Sigmoid colon (tissue), 7 donors: ENCODE measurements at regions of chr10 and their contacts with region 1.

Region 1: DNA sequence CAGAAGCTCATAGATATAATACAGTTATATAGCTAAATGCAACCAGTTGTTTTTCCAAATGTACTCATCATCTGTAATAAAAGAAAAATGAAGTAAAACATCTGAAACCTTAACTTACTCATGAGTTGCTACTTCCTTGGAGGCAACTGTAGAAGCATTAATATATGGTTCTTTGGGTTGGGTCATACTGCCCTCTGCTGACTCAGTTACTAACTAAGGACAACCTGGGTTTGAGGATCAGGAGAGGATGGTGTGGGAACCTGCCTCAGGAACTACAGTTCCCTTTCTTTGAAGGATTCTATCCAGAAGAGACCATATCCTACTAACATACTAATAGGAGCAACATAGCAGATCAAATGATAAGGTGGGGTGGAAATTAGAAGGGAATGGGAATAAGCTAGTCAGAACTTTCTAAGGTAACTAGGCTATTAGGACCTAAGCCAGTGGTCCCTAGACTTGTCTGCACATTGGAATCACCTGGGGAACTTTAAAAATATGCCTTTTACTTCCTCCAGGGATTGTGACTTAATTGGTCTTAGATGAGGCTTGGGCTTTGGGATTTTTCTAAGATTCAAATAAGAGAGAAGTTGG is 20.7 kb downstream of the COX15 start:
- DNase-seq: no peak
- H3K4me3 ChIP-seq: no peak overlapping the region
- H3K27ac ChIP-seq: peak overlapping the region in 1 of 4 donors; percentile 86
- H3K4me1 ChIP-seq: peaks cover 0 to 37% (median 34%) of the 10 kb centered on the region in 4 donors
- H3K27me3 ChIP-seq: no peaks in the 10 kb centered on the region
- CTCF ChIP-seq: peak; percentile 11 to 55 (median 34)
- EP300 ChIP-seq: no peak
- POLR2A ChIP-seq: no peak

Region 2: GRCh38 chr10:99394761-99395386 is 316.4 kb before region 1 on chr10:
- intact Hi-C with region 1: loop called (anchors 5 kb)
- DNase-seq: no peak
- H3K4me3 ChIP-seq: no peak overlapping the region
- H3K27ac ChIP-seq: no peak overlapping the region
- H3K4me1 ChIP-seq: peaks cover 0 to 15% (median 4%) of the 10 kb centered on the region in 4 donors
- H3K27me3 ChIP-seq: no peaks in the 10 kb centered on the region
- CTCF ChIP-seq: no peak
- EP300 ChIP-seq: no peak
- POLR2A ChIP-seq: no peak

Region 3: DNA sequence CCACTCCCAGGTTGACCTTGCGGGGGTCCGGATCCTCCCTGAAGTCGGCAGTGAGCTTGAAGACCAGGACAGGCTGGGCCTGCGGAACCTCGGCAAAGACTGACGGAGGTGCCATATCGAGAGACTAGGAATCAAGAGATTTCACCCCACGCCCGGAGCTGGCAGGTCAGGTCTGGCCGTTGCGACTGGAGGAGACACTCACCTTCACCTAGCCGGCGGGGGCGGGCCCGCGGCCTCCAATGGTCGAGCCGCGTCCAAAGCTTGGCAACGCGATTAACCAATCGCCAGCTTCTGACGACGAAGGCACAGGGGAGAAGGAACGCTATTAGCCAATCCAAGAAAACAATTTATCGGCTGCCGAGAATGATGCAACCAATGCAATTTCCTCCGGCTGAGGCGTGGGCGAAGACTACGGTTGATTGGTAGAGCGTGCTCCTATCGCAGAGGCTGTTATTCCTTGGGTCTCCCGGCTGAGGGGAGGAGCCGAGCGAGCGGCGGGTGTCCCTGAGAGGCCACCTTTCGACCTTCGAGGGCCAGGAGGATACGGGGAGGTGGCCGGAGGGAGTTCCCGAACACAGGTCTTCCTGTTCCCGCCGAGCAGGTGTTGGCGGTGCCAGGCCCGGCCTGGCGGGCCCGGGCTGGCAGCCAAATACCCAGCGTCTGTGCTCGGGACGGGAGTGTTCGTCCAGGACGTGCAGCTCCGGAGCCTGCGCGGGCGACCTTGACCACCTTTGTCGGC is 280.6 kb before region 1 on chr10 and contains the start of gene GOT1:
- intact Hi-C with region 1: loop called (anchors 5 kb)
- DNase-seq: peak; percentile 99
- H3K4me3 ChIP-seq: peak within 1 kb of the TSS; percentile 63 to 84 (median 72)
- H3K27ac ChIP-seq: peak within 1 kb of the TSS; percentile 90 to 97 (median 94)
- H3K4me1 ChIP-seq: peaks cover 0 to 52% (median 48%) of the 10 kb centered on the region in 4 donors
- H3K27me3 ChIP-seq: no peaks in the 10 kb centered on the region
- CTCF ChIP-seq: no peak
- EP300 ChIP-seq: peak in 2 of 4 donors; percentile 34 to 39
- POLR2A ChIP-seq: peak; percentile 95 to 96
- total RNA-seq, gene GOT1: 13.4 to 29.6 (median 15.4) TPM

Region 4: DNA sequence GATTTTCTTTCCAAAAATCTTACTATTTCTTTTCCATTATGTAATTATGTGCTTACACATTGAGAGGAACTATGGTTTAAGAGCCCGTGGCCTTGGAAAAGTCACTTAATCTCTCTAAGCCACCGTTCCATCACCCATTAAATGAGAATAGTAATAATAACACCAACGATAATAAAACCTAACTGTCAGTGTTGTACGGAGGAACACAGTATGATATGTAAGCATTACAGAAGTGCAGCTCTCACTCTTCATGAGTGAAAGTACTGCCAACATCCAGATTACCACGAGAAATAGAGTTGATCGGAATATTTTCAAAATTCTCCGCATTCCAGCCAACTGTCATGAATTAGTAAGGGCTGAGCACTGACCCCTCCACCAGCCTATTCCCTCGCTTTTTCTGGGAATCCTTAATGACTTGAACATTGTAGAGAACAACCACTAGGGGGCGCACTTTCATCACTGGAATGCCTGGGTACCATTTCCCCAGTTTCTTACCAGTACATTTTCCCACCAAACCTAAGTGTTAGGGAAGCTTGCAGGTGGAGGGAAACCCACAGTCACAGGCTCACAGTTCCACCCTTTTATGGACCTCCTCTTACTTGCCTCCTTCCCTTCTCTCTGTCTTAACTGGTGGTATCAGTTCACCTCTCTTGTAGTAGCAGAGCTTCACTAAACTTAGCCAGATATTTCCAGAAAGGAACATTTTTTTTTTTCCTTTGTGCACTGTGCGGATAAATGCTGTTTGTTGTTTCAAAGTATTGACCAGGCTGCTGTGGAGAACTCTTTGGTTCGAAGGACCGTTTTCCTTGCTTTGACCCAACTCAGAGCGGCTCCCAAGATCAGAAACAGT is 150.7 kb before region 1 on chr10:
- intact Hi-C with region 1: loop called (anchors 2 kb)
- DNase-seq: peak; percentile 69
- H3K4me3 ChIP-seq: no peak overlapping the region
- H3K27ac ChIP-seq: no peak overlapping the region
- H3K4me1 ChIP-seq: no peaks in the 10 kb centered on the region
- H3K27me3 ChIP-seq: no peaks in the 10 kb centered on the region
- CTCF ChIP-seq: peak; percentile 49 to 79 (median 64)
- EP300 ChIP-seq: no peak
- POLR2A ChIP-seq: no peak

Region 5: GRCh38 chr10:99620713-99621453 is 90.3 kb before region 1 on chr10:
- intact Hi-C with region 1: loop called (anchors 2 kb)
- DNase-seq: peak; percentile 98
- H3K4me3 ChIP-seq: peak overlapping the region; percentile 49 to 92 (median 84)
- H3K27ac ChIP-seq: peak overlapping the region; percentile 93 to 97 (median 96)
- H3K4me1 ChIP-seq: peaks cover 0 to 49% (median 42%) of the 10 kb centered on the region in 4 donors
- H3K27me3 ChIP-seq: no peaks in the 10 kb centered on the region
- CTCF ChIP-seq: no peak
- EP300 ChIP-seq: peak in 1 of 4 donors; percentile 66
- POLR2A ChIP-seq: peak; percentile 76 to 77

Region 6: GRCh38 chr10:99630439-99630838 is 80.8 kb before region 1 on chr10:
- intact Hi-C with region 1: loop called (anchors 2 kb)
- DNase-seq: no peak
- H3K4me3 ChIP-seq: no peak overlapping the region
- H3K27ac ChIP-seq: no peak overlapping the region
- H3K4me1 ChIP-seq: no peaks in the 10 kb centered on the region
- H3K27me3 ChIP-seq: no peaks in the 10 kb centered on the region
- CTCF ChIP-seq: peak in 2 of 4 experiments; percentile 9 to 21
- EP300 ChIP-seq: no peak
- POLR2A ChIP-seq: no peak

Region 7: DNA sequence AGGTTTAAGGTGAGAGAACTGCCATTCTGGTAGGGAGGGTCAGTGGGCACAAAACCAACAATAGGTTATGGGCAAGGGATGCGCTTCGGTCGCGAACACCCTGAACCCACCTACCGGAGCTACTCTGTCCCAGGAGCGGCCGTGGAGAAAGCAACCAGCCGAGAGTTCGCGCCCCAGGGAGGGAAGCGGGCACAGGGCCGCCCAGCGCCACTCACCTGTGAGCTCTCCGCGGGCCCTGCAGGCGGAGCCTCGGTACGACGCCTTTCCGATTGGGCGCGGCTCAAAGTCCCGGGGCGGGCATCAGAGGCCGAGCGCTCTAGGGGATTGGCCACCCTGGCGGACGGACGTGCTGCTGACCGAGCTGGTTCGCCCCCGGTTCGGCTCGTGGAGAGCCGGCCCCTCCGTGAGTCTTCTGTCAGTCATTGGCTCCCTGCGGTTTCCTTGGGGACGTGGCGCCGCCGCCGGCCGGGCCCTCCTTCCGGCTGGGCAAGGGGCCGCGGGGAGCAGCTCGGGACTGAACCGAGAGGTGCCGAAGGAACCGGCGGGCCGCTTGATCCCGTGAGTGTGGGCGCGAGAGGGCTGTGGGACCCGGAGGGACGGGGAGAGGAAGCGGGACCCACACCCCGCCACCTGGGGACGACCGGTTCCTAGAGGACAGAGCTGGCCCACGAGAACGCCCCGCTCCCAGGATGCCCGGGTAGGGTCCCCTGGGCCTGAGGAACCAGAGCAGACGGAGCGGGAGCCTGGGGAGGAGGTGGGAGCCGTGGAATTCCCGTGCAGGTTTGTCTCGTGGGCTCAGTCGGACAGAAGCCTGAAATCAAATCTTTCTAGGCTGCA is 52.0 kb before region 1 on chr10 and contains the start of gene ENTPD7:
- intact Hi-C with region 1: loop called (anchors 5 kb)
- DNase-seq: peak; percentile 96
- H3K4me3 ChIP-seq: peak within 1 kb of the TSS; percentile 71 to 91 (median 78)
- H3K27ac ChIP-seq: peak within 1 kb of the TSS; percentile 9 to 64 (median 50)
- H3K4me1 ChIP-seq: peaks cover 0 to 21% (median 14%) of the 10 kb centered on the region in 4 donors
- H3K27me3 ChIP-seq: no peaks in the 10 kb centered on the region
- CTCF ChIP-seq: peak in 3 of 4 experiments; percentile 48 to 66 (median 50)
- EP300 ChIP-seq: no peak
- POLR2A ChIP-seq: peak in 1 of 2 donors; percentile 42
- total RNA-seq, gene ENTPD7: 2.9 to 5.5 (median 3.9) TPM

Region 8: GRCh38 chr10:101161494-101162299 is 1450.5 kb after region 1 on chr10:
- intact Hi-C with region 1: no loop called
- DNase-seq: peak; percentile 79
- H3K4me3 ChIP-seq: peak overlapping the region in 3 of 4 donors; percentile 10 to 35 (median 35)
- H3K27ac ChIP-seq: no peak overlapping the region
- H3K4me1 ChIP-seq: peaks cover 0 to 5% (median 2%) of the 10 kb centered on the region in 4 donors
- H3K27me3 ChIP-seq: peaks cover 0 to 64% (median 0%) of the 10 kb centered on the region in 3 donors
- CTCF ChIP-seq: peak; percentile 79 to 99 (median 89)
- EP300 ChIP-seq: no peak
- POLR2A ChIP-seq: no peak